Tibial artery (tissue), 4 donors: ENCODE measurements at regions of chr22 and their contacts with region 1.

Region 1: GRCh38 chr22:45318168-45318557 is 8.4 kb downstream of the FAM118A start:
- DNase-seq: peak; percentile 90 to 92
- H3K4me3 ChIP-seq: peak overlapping the region in 1 of 2 donors; percentile 32
- H3K27ac ChIP-seq: peak overlapping the region; percentile 82 to 83
- H3K4me1 ChIP-seq: peaks cover 9 to 48% (median 27%) of the 10 kb centered on the region in 4 donors
- H3K27me3 ChIP-seq: no peaks in the 10 kb centered on the region
- CTCF ChIP-seq: no peak

Region 2: GRCh38 chr22:45268958-45269844 is 49.0 kb before region 1 on chr22:
- intact Hi-C with region 1: loop called (anchors 2 kb)
- DNase-seq: peak; percentile 79 to 85
- H3K4me3 ChIP-seq: peak overlapping the region; percentile 55
- H3K27ac ChIP-seq: peak overlapping the region; percentile 64 to 69
- H3K4me1 ChIP-seq: peaks cover 3 to 43% (median 30%) of the 10 kb centered on the region in 4 donors
- H3K27me3 ChIP-seq: no peaks in the 10 kb centered on the region
- CTCF ChIP-seq: peak; percentile 89 to 97

Region 3: GRCh38 chr22:45389521-45389920 is 71.4 kb after region 1 on chr22:
- intact Hi-C with region 1: no loop called
- DNase-seq: no peak
- H3K4me3 ChIP-seq: no peak overlapping the region
- H3K27ac ChIP-seq: no peak overlapping the region
- H3K4me1 ChIP-seq: no peaks in the 10 kb centered on the region
- H3K27me3 ChIP-seq: no peaks in the 10 kb centered on the region
- CTCF ChIP-seq: no peak